BJ (cell line): ENCODE measurements at regions of chr1 and their contacts with region 1.

Region 1: DNA sequence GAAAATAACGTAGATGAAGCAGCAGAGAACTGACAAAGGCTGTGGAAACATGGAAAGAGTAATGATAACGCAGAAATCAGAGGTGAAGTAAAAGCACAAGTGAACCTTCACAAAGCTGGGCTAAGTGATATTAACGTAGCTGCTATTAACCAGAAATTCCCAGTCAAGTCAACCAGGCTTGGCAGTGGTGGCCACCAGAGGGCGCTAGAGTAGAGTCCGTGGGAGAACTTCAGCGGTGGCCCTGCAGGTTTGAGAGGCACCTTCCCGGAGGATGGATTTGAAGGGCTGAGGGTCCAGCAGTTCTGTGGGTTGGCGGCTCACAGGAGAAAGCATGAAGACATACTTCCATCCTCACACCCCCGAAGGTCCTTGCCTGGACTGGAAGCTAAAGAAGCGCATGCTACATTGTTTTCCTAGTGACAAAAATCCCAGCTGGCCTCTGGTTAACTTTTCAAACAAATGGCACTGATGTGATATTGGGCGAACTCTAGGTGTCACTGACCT is 81.7 kb upstream of the ZNF648 start:
- DNase-seq: no peak
- H3K4me3 ChIP-seq: no peak overlapping the region
- H3K27me3 ChIP-seq: no peaks in the 10 kb centered on the region; the same call in 1 of the 2 replicates
- CTCF ChIP-seq: peak; percentile 96

Region 2: DNA sequence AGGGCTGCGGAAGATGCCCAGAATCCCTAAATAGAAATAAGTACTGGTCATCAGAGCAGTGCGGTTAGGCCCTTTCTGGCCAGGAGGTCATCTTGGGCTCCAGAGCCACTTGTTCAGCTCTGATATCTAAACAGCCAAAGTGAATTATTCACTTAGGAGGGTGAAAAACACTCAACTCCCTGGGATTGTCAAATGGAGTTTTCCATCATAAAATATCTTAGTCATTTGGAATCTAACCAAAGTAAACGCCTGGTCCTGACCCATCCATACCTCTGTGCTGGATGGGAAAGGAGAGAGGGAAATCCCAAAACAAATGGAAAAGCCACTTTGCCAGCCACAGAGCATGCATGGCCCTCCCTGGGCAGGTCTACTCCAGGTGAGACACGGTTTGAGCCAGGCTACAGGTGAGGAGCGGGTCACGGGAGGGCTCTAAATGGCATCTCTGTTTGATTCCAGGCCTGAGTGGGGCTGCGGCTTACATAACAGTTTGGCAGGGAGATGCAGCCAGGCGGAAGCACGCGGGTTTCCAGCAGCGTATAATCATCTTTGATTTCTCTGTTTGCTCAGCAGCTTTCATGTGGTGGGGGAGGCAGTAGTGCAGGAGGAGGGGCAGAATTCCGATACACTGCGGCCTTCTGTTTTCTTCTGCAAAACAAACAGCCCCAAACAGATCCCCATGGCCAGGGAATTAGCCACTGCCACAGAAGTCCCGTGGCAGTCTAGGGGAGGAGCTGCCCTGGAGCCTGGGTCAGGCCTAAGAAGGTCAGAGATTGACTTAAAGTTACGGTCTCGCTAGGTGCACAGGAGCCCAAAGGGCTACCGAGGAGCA is 22.6 kb before region 1 on chr1:
- CTCF ChIA-PET with region 1: interaction called, 14 read pairs
- POLR2A ChIA-PET with region 1: no interaction called
- DNase-seq: no peak
- H3K4me3 ChIP-seq: no peak overlapping the region
- H3K27me3 ChIP-seq: no peaks in the 10 kb centered on the region
- CTCF ChIP-seq: no peak

Region 3: DNA sequence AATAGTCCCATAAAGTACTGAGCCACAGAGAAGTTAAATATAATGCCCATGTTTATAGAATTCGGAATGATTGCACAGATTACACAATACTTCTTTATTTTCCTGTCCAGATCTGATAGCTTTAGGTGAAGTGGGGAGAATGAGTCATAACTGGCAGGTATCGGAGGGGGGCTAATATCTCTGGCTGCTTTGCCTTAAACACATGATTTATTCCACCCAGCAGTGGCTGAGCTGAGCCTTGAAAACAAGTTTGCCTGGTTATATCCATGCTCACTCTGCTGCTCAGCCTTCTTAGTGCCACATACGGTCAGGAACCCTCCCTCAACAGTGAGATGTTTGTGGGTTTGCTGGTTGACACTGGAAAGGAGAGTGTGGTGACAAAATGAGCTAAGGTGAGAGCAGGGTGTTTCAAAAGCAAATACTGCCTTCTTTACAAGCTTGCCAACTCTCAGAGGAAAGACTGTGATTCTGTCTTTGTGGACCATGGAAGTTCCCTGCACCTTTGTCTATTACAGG is 38.0 kb after region 1 on chr1:
- CTCF ChIA-PET with region 1: no interaction called
- POLR2A ChIA-PET with region 1: no interaction called
- DNase-seq: no peak
- H3K4me3 ChIP-seq: no peak overlapping the region
- H3K27me3 ChIP-seq: peaks cover 5% of the 10 kb centered on the region
- CTCF ChIP-seq: no peak

Region 4: DNA sequence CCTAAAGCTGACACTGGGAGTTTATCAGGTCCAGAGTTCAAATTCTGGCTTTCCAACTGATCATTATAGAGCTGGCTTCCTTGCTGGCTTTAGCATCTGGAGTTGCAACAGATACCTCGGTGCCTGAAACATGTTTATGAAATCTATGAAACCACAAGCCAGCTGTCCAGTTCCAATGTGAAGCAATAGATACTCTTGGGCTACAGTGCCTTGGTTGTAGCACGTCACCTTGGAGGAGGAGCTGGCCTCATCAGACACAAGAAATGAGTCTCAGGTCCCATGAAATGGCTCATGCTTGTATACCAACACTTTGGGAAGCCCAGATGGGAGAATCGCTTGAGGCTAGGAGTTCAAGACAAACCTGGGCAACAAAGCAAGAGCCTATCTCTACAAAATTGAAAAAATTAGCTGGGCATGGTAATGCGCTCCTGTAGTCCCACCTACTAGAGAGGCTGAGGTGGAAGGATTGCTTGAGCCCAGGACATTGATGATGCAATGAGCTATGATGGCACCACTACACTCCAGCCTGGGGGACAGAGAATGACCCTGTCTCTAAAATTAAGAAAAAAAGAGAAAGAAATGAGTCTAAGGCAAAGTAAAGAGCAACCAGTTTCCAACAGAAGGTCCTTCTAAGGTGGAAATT is 50.8 kb after region 1 on chr1:
- CTCF ChIA-PET with region 1: interaction called, 15 read pairs
- POLR2A ChIA-PET with region 1: no interaction called
- DNase-seq: peak; percentile 67
- H3K4me3 ChIP-seq: no peak overlapping the region
- H3K27me3 ChIP-seq: peaks cover 5% of the 10 kb centered on the region
- CTCF ChIP-seq: no peak

Region 5: GRCh38 chr1:182235952-182236650 is 92.9 kb after region 1 on chr1:
- CTCF ChIA-PET with region 1: interaction called, 10 read pairs
- POLR2A ChIA-PET with region 1: no interaction called
- DNase-seq: no peak
- H3K4me3 ChIP-seq: no peak overlapping the region
- H3K27me3 ChIP-seq: no peaks in the 10 kb centered on the region
- CTCF ChIP-seq: no peak

Region 6: GRCh38 chr1:182301467-182302198 is 158.4 kb after region 1 on chr1:
- CTCF ChIA-PET with region 1: interaction called, 15 read pairs
- POLR2A ChIA-PET with region 1: no interaction called
- DNase-seq: no peak
- H3K4me3 ChIP-seq: no peak overlapping the region
- H3K27me3 ChIP-seq: no peaks in the 10 kb centered on the region
- CTCF ChIP-seq: no peak

Region 7: GRCh38 chr1:182376936-182377574 is 233.8 kb after region 1 on chr1:
- CTCF ChIA-PET with region 1: interaction called, 15 read pairs
- POLR2A ChIA-PET with region 1: no interaction called
- DNase-seq: no peak
- H3K4me3 ChIP-seq: no peak overlapping the region
- H3K27me3 ChIP-seq: no peaks in the 10 kb centered on the region
- CTCF ChIP-seq: no peak

Region 8: DNA sequence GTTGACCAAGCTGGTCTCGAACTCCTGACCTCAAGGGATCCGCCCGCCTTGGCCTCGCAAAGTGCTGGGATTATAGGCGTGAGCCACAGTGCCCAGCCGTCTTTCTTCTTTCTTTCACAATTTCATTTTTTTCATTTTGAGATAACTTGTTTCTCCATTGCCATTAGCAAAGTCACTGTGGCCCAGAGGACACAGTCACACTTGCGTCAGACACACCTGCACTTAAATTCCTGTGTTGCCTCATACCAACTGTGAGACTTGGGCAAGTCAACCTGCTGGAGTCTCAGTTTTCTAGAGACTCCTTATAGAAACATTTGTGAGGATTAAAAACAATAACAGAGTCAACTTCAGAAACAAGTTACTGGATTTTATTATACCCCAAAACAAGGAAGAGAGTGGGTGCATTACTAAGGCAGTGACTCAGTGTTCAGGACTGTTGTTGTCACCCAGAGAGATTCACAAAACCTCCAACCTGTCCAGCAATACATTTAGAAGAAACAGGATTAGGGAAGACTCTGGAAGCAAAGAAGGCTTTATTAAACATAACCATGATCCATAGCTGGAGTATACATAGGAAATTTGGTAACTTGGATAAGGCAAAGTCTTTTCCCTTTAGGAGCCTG is 254.7 kb after region 1 on chr1:
- CTCF ChIA-PET with region 1: interaction called, 291 read pairs
- POLR2A ChIA-PET with region 1: interaction called, 9 read pairs
- DNase-seq: no peak
- H3K4me3 ChIP-seq: no peak overlapping the region
- H3K27me3 ChIP-seq: no peaks in the 10 kb centered on the region
- CTCF ChIP-seq: no peak